ENCODE measurements at regions of chr2 and their contacts with region 1.

Region 1: DNA sequence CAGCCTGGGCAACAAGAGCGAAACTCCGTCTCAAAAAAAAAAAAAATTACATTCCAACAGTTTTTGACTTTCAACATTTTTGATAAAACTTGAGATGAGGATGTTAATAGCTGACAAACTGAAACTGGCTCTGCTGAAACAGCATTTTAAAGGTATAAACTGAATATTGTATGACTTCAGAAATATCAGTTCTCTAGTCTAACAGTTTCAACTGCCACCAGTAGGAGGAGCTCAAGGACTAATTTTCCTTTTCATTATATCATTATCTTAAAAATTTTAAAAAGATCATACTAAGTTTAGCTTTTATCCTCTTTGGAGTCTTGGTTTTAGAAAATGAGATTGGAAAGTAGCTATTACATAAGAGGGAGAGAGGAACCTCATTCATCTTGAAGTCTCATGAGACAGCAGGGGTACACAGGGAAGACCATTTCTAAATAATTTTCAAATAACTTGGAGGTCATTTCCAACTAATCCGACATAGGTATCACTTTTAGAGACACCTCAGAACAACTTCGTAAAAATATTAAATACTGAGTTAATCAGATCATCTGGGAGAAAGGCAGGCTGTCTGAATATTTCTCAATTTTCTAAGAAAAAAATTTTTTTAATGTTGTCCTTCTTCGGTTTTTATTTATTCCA is 37.6 kb upstream of the MCM6 start:
- DNase-seq: peak; percentile 40 to 70 (median 49)
- H3K4me3 ChIP-seq: no peak overlapping the region
- H3K4me3 Mint-ChIP-seq: no peak overlapping the region
- H3K27ac ChIP-seq: peak overlapping the region in 1 of 2 donors; percentile 63
- H3K27ac Mint-ChIP-seq: peak overlapping the region in 6 of 7 donors; percentile 51 to 83 (median 68)
- H3K4me1 ChIP-seq: peaks cover 4 to 11% of the 10 kb centered on the region in 2 donors
- H3K4me1 Mint-ChIP-seq: peaks cover 5% of the 10 kb centered on the region
- H3K27me3 ChIP-seq: no peaks in the 10 kb centered on the region
- H3K27me3 Mint-ChIP-seq: no peaks in the 10 kb centered on the region
- CTCF ChIP-seq: peak; percentile 94

Region 2: GRCh38 chr2:135245055-135245454 is 668.8 kb before region 1 on chr2:
- intact Hi-C with region 1: no loop called
- DNase-seq: no peak
- H3K4me3 ChIP-seq: no peak overlapping the region
- H3K4me3 Mint-ChIP-seq: no peak overlapping the region
- H3K27ac ChIP-seq: no peak overlapping the region
- H3K27ac Mint-ChIP-seq: no peak overlapping the region
- H3K4me1 ChIP-seq: no peaks in the 10 kb centered on the region
- H3K4me1 Mint-ChIP-seq: no peaks in the 10 kb centered on the region
- H3K27me3 ChIP-seq: no peaks in the 10 kb centered on the region
- H3K27me3 Mint-ChIP-seq: no peaks in the 10 kb centered on the region
- CTCF ChIP-seq: no peak

Region 3: DNA sequence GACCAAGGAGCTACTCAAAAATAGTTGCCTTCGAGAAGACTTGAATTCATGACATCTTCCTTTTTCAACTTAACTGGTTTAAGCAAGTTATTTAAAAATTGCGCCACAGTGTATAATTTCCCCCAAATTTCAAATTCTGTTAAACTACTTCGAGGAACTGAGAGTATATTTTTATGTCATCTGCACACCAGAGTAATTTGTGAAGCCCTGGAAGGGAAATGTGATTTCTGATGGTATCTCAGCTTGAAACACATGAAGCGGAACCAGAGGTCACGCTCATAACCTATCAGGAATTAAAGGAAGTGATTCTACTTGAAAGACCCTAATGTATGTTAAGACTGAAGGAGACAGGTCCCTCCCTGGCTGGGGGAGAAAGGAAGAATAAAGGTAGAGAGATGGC is 105.5 kb after region 1 on chr2:
- intact Hi-C with region 1: no loop called
- DNase-seq: peak; percentile 70 to 81 (median 76)
- H3K4me3 ChIP-seq: peak overlapping the region in 1 of 3 experiments; percentile 30
- H3K4me3 Mint-ChIP-seq: no peak overlapping the region
- H3K27ac ChIP-seq: peak overlapping the region; percentile 85 to 90
- H3K27ac Mint-ChIP-seq: peak overlapping the region; percentile 82 to 97 (median 94)
- H3K4me1 ChIP-seq: peaks cover 100% of the 10 kb centered on the region in 2 donors
- H3K4me1 Mint-ChIP-seq: peaks cover 91% of the 10 kb centered on the region
- H3K27me3 ChIP-seq: no peaks in the 10 kb centered on the region
- H3K27me3 Mint-ChIP-seq: no peaks in the 10 kb centered on the region
- CTCF ChIP-seq: no peak

Region 4: DNA sequence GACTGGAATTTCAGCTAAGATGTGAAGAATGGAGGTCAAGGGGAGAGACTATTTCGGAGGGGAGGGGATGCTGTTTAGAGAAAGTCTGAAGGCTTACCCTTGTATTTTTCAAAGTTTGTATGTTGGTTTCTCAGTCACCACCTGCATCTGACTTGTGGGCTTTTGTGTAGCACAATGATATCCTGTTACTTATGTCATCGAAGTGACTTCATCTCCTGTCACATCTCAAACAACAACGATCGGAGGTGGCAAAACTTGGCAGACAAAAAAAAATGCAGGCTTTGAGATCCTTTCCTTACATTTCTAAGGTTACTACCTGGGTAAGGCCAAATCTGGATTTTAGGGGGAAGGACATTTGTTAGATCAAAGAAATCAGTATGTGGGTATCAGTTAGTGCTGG is 215.8 kb after region 1 on chr2:
- intact Hi-C with region 1: loop called in 1 of 2 experiments (anchors 10 kb)
- DNase-seq: peak in 1 of 3 donors; percentile 34
- H3K4me3 ChIP-seq: no peak overlapping the region
- H3K4me3 Mint-ChIP-seq: peak overlapping the region in 1 of 2 donors; percentile 17
- H3K27ac ChIP-seq: peak overlapping the region in 1 of 2 donors; percentile 15
- H3K27ac Mint-ChIP-seq: peak overlapping the region in 5 of 7 donors; percentile 10 to 80 (median 60)
- H3K4me1 ChIP-seq: peaks cover 75 to 86% of the 10 kb centered on the region in 2 donors
- H3K4me1 Mint-ChIP-seq: peaks cover 91% of the 10 kb centered on the region
- H3K27me3 ChIP-seq: no peaks in the 10 kb centered on the region
- H3K27me3 Mint-ChIP-seq: peaks cover 0 to 1% (median 0%) of the 10 kb centered on the region in 3 donors
- CTCF ChIP-seq: no peak

Region 5: GRCh38 chr2:136207030-136207623 is 293.3 kb after region 1 on chr2:
- intact Hi-C with region 1: loop called in 1 of 2 experiments (anchors 5 kb)
- DNase-seq: peak; percentile 67 to 70 (median 67)
- H3K4me3 ChIP-seq: no peak overlapping the region
- H3K4me3 Mint-ChIP-seq: peak overlapping the region; percentile 37 to 59
- H3K27ac ChIP-seq: peak overlapping the region in 1 of 2 donors; percentile 75
- H3K27ac Mint-ChIP-seq: peak overlapping the region; percentile 68 to 95 (median 89)
- H3K4me1 ChIP-seq: peaks cover 61 to 71% of the 10 kb centered on the region in 2 donors
- H3K4me1 Mint-ChIP-seq: peaks cover 72% of the 10 kb centered on the region
- H3K27me3 ChIP-seq: no peaks in the 10 kb centered on the region
- H3K27me3 Mint-ChIP-seq: peaks cover 0 to 1% (median 1%) of the 10 kb centered on the region in 3 donors
- CTCF ChIP-seq: no peak

Region 6: DNA sequence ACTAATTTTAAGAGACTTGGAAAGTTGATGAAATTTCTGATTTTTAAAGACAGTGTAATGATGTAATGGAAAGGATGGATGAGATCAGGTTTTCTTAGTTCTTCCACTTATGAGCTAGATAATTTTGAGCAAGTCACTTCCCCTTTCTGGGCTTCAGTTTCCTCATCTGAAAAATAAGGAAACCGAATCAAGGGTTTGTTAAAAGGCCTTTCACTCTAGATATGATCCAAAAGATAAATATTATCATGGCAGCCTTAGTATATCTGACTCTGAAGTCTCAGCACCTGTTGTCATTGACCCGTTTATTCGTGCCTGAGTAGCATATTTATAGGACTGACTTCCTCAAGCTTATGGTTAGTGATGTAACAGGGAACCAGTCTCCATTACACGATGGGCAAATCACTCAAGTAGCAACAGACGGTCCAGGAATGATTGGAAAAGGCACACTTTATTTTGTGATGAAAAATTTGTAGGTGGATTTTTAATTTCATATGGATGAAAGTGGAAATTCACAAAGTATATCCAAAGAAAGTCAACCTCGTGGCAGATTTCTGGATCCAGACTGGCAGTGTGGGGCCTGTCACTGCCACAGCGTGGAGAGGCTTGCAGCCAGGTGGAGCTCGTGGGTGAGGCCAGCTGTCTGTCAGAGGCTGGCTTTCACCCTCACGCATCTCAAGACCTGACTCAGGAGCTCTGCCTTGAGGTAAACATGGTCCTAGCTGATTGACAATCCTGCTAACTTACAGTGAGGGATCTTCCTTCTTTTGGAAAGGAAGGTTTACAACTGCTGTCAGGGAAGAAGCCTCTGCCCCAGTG is 342.0 kb after region 1 on chr2:
- intact Hi-C with region 1: no loop called
- DNase-seq: peak; percentile 87 to 95 (median 91)
- H3K4me3 ChIP-seq: no peak overlapping the region
- H3K4me3 Mint-ChIP-seq: no peak overlapping the region
- H3K27ac ChIP-seq: peak overlapping the region; percentile 88 to 91
- H3K27ac Mint-ChIP-seq: peak overlapping the region; percentile 94 to 96 (median 95)
- H3K4me1 ChIP-seq: peaks cover 37 to 39% of the 10 kb centered on the region in 2 donors
- H3K4me1 Mint-ChIP-seq: peaks cover 57% of the 10 kb centered on the region
- H3K27me3 ChIP-seq: no peaks in the 10 kb centered on the region
- H3K27me3 Mint-ChIP-seq: peaks cover 0 to 13% (median 0%) of the 10 kb centered on the region in 3 donors
- CTCF ChIP-seq: no peak

Region 7: DNA sequence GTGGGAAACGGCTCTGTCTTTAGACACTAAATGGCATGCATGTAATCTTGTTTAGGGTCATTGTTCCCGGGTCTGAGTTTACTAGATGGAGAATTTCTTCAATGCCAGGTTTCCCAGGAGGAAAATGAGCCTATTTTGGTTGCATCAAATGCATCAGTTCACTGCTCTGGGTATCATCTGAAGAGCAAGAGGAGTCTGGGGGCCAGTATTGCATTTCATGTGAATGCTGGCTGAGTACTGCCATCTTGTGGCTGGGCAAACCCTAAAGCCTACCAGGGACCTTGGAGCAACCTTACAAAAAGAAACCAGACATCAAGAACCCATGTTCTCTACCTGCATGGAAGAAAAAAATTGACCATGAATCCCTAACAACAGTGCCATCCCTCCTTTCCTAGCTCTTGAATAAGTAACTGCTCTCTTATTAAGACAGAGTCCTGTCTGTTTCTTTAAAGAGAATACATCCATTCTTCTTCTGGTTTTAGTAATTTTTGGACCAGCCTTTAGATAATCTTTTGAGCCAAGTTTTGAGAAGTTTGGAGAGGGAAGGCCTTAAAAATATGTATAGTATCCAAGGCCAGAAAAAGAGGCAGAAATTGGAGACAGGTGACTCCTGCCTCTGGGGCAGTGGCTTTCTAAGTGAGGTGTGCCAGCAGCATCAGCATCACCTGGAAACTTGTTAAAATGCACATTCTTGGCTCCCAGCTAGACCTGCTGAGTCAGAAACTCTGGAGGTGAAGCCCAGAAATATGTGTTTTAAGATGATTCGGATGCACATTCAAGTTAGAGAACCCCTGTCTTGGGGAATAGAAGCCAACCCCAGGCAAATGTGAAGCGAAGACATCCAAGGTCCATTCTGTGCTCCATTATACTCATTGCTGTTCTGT is 465.1 kb after region 1 on chr2:
- intact Hi-C with region 1: loop called (anchors 2 kb)
- DNase-seq: peak; percentile 59 to 74 (median 67)
- H3K4me3 ChIP-seq: peak overlapping the region in 1 of 3 experiments; percentile 12
- H3K4me3 Mint-ChIP-seq: no peak overlapping the region
- H3K27ac ChIP-seq: peak overlapping the region in 1 of 2 donors; percentile 36
- H3K27ac Mint-ChIP-seq: peak overlapping the region in 5 of 7 donors; percentile 17 to 66 (median 27)
- H3K4me1 ChIP-seq: peaks cover 22 to 23% of the 10 kb centered on the region in 2 donors
- H3K4me1 Mint-ChIP-seq: peaks cover 32% of the 10 kb centered on the region
- H3K27me3 ChIP-seq: no peaks in the 10 kb centered on the region
- H3K27me3 Mint-ChIP-seq: peaks cover 0 to 1% (median 0%) of the 10 kb centered on the region in 3 donors
- CTCF ChIP-seq: peak; percentile 88

Region 8: DNA sequence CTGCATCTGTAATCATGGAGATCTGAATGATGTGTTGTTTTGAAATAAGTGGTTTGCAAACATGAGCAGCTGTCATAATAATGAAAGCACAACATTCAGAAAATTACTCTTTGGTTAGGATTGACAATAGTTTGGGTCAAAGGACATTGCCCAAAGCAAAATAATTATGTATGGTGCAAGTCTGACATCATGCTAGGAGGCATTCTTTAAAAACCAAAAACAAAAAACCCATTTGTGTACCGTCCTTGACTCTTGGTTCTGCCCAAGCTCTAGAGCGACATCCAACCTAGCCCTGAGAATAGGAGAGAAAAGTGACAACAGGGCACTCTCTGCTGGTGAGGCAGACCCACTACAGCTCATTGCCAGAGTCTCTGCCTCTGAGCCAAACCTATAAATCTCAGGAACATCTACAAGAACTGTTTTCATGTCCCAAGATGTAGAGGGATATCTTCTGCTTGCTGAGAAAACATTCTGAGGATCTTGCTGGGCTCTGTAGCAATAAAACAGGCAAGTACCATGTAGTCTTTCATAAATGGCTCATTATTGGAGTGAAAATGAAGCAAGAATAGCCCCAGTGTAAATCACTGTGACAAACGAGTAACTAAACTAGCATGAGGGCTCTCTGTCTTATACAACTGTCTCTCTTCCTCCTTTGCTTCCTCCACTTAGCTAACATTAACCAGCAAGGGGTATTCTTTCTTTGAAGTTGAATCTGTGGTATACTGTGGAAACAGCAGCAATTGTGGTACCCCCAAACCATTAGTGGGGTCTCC is 470.9 kb after region 1 on chr2:
- intact Hi-C with region 1: loop called (anchors 2 kb)
- DNase-seq: peak; percentile 41 to 62 (median 60)
- H3K4me3 ChIP-seq: no peak overlapping the region
- H3K4me3 Mint-ChIP-seq: peak overlapping the region in 1 of 2 donors; percentile 19
- H3K27ac ChIP-seq: no peak overlapping the region
- H3K27ac Mint-ChIP-seq: peak overlapping the region in 5 of 7 donors; percentile 4 to 76 (median 41)
- H3K4me1 ChIP-seq: peaks cover 15 to 17% of the 10 kb centered on the region in 2 donors
- H3K4me1 Mint-ChIP-seq: peaks cover 32% of the 10 kb centered on the region
- H3K27me3 ChIP-seq: no peaks in the 10 kb centered on the region
- H3K27me3 Mint-ChIP-seq: peaks cover 0 to 2% (median 0%) of the 10 kb centered on the region in 3 donors
- CTCF ChIP-seq: peak; percentile 80

Region 9: GRCh38 chr2:137838255-137839092 is 1924.6 kb after region 1 on chr2:
- intact Hi-C with region 1: loop called in 1 of 2 experiments (anchors 10 kb)
- DNase-seq: peak; percentile 9 to 30 (median 17)
- H3K4me3 ChIP-seq: no peak overlapping the region
- H3K4me3 Mint-ChIP-seq: no peak overlapping the region
- H3K27ac ChIP-seq: no peak overlapping the region
- H3K27ac Mint-ChIP-seq: no peak overlapping the region
- H3K4me1 ChIP-seq: no peaks in the 10 kb centered on the region
- H3K4me1 Mint-ChIP-seq: no peaks in the 10 kb centered on the region
- H3K27me3 ChIP-seq: no peaks in the 10 kb centered on the region
- H3K27me3 Mint-ChIP-seq: peaks cover 0 to 2% (median 0%) of the 10 kb centered on the region in 3 donors
- CTCF ChIP-seq: peak; percentile 76

Measured in CD14-positive monocyte (primary cell).